A673 (cell line): ENCODE measurements at regions of chr15 and their contacts with region 1.

Region 1: GRCh38 chr15:58749532-58750337 is at the start of gene ADAM10:
- DNase-seq: peak; percentile 100
- H3K4me3 ChIP-seq: peak within 1 kb of the TSS; percentile 67
- H3K27ac ChIP-seq: peak within 1 kb of the TSS; percentile 92
- H3K4me1 ChIP-seq: peaks cover 14% of the 10 kb centered on the region
- H3K27me3 ChIP-seq: no peaks in the 10 kb centered on the region
- CTCF ChIP-seq: no peak
- total RNA-seq, gene ADAM10: 116 and 130 TPM in 2 replicates

Region 2: GRCh38 chr15:58433597-58434333 is 316.0 kb before region 1 on chr15:
- CTCF ChIA-PET with region 1: no interaction called
- POLR2A ChIA-PET with region 1: no interaction called
- intact Hi-C with region 1: loop called (anchors 5 kb)
- DNase-seq: peak; percentile 86
- H3K4me3 ChIP-seq: no peak overlapping the region
- H3K27ac ChIP-seq: no peak overlapping the region
- H3K4me1 ChIP-seq: peaks cover 21% of the 10 kb centered on the region
- H3K27me3 ChIP-seq: no peaks in the 10 kb centered on the region
- CTCF ChIP-seq: no peak

Region 3: DNA sequence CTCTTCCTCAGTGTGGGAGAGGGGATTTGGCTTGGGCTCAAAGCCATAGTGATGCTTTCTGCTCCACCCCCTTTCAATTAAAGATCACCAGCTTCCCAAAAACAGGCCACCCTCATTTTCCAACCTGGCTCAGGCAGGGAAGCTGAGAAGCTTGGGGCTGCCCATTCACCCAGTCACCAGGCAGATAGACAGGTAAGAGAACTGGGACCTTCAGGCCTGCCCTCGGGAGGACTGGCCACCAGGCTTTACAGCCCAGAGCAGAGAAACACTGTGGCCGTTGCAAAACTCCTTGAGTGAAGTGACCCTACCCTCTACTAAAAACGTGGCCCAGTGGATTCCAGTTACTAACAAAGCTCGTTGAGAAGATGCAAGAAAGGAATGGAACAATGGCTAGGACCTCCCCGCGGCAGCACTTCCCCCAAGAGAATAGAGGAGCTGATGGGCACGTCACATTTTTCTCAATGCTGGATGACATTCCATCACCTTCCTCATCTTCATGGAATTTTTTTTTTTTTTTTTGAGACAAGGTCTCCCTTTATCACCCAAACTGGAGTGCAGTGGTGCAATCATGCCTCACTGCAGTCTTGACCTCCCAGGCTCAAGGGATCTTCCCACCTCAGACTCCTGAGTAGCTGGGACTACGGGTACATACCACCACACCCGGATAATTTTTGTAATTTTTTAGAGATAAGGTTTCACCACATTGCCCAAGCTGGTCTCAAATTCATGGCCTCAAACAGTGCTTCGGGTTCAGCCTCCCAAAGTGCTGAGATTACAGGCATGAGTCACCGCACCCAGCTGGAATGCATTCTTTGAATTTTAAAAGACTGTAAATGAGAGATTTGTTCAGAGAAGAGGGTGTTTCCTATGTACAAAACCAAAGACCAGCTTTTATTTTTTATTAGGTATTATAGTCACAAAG is 280.0 kb before region 1 on chr15:
- CTCF ChIA-PET with region 1: no interaction called
- POLR2A ChIA-PET with region 1: no interaction called
- intact Hi-C with region 1: loop called (anchors 5 kb)
- DNase-seq: peak; percentile 93
- H3K4me3 ChIP-seq: no peak overlapping the region
- H3K27ac ChIP-seq: peak overlapping the region; percentile 63
- H3K4me1 ChIP-seq: peaks cover 68% of the 10 kb centered on the region
- H3K27me3 ChIP-seq: no peaks in the 10 kb centered on the region
- CTCF ChIP-seq: no peak

Region 4: DNA sequence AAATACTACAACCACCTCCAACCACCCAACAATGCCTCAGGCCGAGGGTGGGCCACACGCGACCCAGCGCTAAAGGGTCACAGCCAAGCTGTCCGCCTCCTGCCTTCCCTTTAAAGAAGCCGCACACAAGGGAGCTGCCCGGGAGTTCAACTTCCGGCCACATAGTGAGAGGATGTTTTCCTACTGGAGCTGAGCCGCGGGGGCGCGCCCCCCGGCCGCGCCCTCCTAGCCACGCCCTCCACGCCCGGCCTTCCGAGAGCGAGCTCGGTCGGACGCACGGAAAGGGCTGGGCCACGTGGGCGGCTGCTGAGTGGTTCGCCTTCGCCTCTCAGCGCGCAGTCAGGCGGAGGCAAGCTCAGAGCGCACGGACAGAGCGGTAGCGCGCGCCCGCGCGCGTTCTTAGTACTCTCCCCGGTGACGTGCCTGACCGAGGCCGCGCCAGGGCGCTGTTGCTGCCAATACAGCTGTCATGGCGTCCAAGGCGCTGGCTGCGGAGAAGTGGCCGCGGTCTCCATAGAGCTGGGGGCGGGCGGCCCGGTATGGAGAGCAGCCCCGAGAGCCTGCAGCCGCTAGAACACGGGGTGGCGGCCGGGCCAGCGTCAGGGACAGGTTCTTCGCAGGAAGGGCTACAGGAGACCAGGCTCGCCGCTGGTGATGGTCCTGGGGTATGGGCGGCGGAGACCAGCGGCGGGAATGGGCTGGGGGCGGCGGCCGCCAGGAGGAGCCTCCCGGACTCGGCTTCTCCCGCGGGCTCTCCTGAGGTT is 21.3 kb after region 1 on chr15 and contains the start of gene MINDY2:
- CTCF ChIA-PET with region 1: interaction called, 14 read pairs
- POLR2A ChIA-PET with region 1: interaction called, 8 read pairs
- intact Hi-C with region 1: no loop called
- DNase-seq: peak; percentile 99
- H3K4me3 ChIP-seq: peak within 1 kb of the TSS; percentile 85
- H3K27ac ChIP-seq: peak within 1 kb of the TSS; percentile 83
- H3K4me1 ChIP-seq: peaks cover 10% of the 10 kb centered on the region
- H3K27me3 ChIP-seq: no peaks in the 10 kb centered on the region
- CTCF ChIP-seq: peak; percentile 53
- total RNA-seq, gene MINDY2: 13.0 and 14.1 TPM in 2 replicates